ENCODE measurements at regions of chr4 and their contacts with region 1.

Region 1: DNA sequence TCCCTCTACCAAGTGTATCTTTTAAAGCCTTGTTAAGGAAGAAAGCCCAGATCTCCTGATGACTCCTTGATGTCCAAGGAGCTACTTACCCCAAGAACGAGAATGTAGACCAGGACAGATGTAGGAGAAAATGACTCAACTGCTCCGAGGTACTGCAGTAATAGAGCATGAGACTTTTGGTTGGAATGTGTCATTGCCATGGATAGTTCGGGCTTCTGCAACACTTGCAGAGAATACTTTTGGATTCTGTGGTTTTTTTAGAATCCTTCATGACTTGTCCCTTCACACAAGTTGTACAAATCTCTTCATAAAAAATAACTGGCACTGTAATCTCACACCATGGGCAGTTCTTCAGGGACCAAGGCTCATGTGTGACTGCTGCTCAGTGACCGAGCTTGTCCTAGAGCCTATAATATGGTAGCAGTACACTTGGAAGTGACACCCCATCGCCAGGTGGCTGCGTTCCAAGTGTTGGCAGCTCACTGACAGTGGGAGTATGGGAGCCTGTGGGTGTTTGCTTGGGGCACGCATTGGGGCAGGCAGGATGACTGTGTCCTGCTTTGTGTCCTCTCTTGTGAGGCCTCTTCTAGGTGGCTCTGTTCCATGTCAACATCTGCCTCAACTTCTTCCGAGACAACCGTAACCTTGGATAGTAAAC is 87.9 kb upstream of the WDR1 start:
- DNase-seq: no peak
- ATAC-seq: no peak
- H3K4me3 ChIP-seq: no peak overlapping the region
- H3K27ac ChIP-seq: no peak overlapping the region
- H3K4me1 ChIP-seq: no peaks in the 10 kb centered on the region
- H3K27me3 ChIP-seq: no peaks in the 10 kb centered on the region
- CTCF ChIP-seq: no peak
- POLR2A ChIP-seq: no peak

Region 2: GRCh38 chr4:10232114-10232513 is 27.6 kb after region 1 on chr4:
- intact Hi-C with region 1: loop called in 1 of 2 experiments (anchors 2 kb)
- DNase-seq: no peak
- ATAC-seq: no peak
- H3K4me3 ChIP-seq: no peak overlapping the region
- H3K27ac ChIP-seq: no peak overlapping the region
- H3K4me1 ChIP-seq: no peaks in the 10 kb centered on the region
- H3K27me3 ChIP-seq: no peaks in the 10 kb centered on the region
- CTCF ChIP-seq: no peak
- POLR2A ChIP-seq: no peak